ENCODE measurements at regions of chr1 and their contacts with region 1.

Region 1: DNA sequence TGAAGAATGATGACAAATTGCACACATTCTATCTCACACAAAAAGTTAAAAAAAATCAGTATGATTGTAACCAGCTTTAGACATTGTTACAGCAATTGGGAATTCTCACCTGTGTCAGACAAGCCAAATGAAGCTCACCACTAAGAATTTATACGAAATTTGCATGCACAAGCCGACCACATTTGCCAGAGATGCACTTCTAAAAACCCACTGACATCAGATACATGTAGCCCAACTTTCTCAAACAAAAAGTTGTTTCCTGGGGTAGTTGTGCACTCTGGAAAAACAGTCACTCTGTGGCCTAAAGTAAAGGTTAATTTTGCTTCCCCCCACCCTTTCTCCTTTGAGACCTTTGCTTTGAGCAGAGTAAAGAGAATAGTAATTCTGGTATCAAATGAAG is 67.9 kb upstream of the IL12RB2 start:
- DNase-seq: no peak

Region 2: DNA sequence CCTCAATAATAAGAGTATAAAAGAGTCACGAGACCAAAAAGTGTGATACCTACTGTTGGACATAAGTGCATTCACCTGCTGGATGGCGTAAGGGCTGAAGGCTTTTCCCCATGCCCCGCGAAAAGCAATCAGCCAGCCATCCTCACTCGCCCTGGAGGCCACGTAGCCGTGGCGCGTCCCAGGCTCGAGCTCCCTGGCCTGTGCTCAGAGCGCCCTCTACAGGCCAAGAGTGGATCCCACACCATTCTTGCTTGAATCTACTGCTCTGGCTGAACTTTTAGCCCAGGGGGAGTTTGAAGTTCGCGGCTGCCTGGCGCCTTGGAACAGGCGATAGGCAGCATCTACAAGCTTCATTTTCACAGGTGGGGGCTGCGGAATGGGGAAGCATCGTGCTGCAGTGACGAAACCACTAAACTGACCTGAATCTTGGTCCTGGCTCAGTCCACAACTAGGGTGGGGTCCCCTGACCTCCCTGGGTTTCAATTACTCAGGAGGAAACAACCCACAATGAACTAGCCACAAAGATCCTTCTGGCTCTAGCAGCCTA is 260.7 kb after region 1 on chr1:
- intact Hi-C with region 1: loop called (anchors 5 kb)
- DNase-seq: peak; percentile 89